ENCODE measurements at regions of chr1 and their contacts with region 1.

Region 1: DNA sequence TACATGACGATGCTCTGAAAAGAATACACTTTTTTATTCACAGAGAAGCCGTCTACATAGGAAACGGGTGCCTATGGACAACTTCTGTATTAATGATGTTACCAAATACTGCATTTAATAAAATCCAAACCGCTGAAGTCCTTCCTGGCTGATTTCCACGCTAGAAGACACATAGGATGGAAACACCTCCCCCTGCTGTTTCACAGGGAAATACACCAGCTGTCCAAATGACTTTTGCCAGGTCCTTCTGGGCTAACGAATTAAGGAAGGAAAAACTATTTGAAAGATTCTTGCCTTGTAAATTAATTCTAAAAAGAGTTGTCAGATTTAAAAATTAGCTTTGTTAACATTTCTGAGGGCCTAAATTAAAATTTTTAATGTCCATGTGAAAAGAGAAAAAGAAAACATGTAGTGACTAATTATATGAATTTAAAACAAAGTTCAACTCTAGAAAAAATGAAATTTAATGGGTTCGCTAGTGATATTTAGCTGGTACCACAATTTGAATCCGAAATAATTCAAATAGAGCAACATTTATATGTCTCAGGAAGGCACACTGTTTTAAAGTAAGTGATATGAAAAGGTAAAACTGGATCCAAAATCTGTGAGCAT is 146.0 kb downstream of the RERE start:
- DNase-seq: peak in 1 of 2 experiments; percentile 44
- H3K4me3 ChIP-seq: no peak overlapping the region
- H3K4me3 Mint-ChIP-seq: no peak overlapping the region
- H3K27ac Mint-ChIP-seq: peak overlapping the region; percentile 33
- H3K4me1 ChIP-seq: peaks cover 38% of the 10 kb centered on the region
- H3K4me1 Mint-ChIP-seq: peaks cover 23% of the 10 kb centered on the region
- H3K27me3 ChIP-seq: no peaks in the 10 kb centered on the region
- H3K27me3 Mint-ChIP-seq: no peaks in the 10 kb centered on the region
- CTCF ChIP-seq: peak; percentile 61 to 80

Region 2: GRCh38 chr1:8629241-8630091 is 41.9 kb before region 1 on chr1:
- CTCF ChIA-PET with region 1: no interaction called
- POLR2A ChIA-PET with region 1: no interaction called
- intact Hi-C with region 1: loop called (anchors 5 kb)
- DNase-seq: no peak
- H3K4me3 ChIP-seq: no peak overlapping the region
- H3K4me3 Mint-ChIP-seq: no peak overlapping the region
- H3K27ac Mint-ChIP-seq: peak overlapping the region; percentile 9
- H3K4me1 ChIP-seq: peaks cover 56% of the 10 kb centered on the region
- H3K4me1 Mint-ChIP-seq: peaks cover 47% of the 10 kb centered on the region
- H3K27me3 ChIP-seq: no peaks in the 10 kb centered on the region
- H3K27me3 Mint-ChIP-seq: no peaks in the 10 kb centered on the region
- CTCF ChIP-seq: no peak